CD4-positive, alpha-beta T cell (primary cell): ENCODE measurements at regions of chr2 and their contacts with region 1.

Region 1: DNA sequence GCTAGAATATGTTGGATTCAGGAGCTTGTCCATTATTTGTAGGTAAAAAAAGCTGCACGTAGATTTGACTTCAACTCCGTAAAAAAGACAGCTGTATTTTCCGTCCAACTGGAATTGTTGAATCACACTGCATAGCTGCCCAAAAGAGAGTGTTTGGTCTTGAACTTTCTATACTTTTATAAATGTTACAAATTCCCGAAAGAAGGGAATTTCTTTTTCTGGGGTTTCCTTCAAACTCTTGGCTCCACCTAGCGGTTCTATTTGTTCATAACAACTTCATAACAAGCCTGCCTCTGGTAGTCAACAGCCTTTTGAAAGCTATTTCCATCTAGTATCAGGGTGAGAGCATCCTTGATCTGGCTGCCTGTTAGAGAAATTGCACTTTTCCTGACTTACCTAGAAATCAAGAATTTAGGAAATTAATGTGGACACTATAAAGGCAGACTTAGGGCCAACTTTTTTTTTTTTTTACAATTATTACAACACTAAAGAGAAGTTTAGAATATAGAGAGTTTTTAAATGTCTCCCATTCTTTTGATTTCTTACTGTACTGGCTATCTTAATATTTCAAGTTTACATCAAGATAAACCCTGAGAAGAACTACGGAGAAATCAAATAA is 48.1 kb downstream of the TMEM185B start:
- DNase-seq: peak in 4 of 14 experiments; percentile 26 to 79 (median 74)
- ATAC-seq: no peak
- H3K4me3 ChIP-seq: no peak overlapping the region
- H3K4me3 Mint-ChIP-seq: peak overlapping the region; percentile 50
- H3K27ac ChIP-seq: no peak overlapping the region
- H3K27ac Mint-ChIP-seq: peak overlapping the region; percentile 95
- H3K4me1 ChIP-seq: peaks cover 34% of the 10 kb centered on the region
- H3K4me1 Mint-ChIP-seq: peaks cover 52% of the 10 kb centered on the region
- H3K27me3 ChIP-seq: no peaks in the 10 kb centered on the region
- H3K27me3 Mint-ChIP-seq: no peaks in the 10 kb centered on the region
- CTCF ChIP-seq: peak; percentile 88

Region 2: GRCh38 chr2:119641562-119642258 is 533.4 kb before region 1 on chr2:
- CTCF ChIA-PET with region 1: no interaction called
- POLR2A ChIA-PET with region 1: interaction called, 5 read pairs
- intact Hi-C with region 1: loop called (anchors 1 to 2 kb)
- DNase-seq: peak; percentile 46 to 84 (median 64)
- ATAC-seq: peak; percentile 94
- H3K4me3 ChIP-seq: no peak overlapping the region
- H3K4me3 Mint-ChIP-seq: no peak overlapping the region
- H3K27ac ChIP-seq: no peak overlapping the region
- H3K27ac Mint-ChIP-seq: no peak overlapping the region
- H3K4me1 ChIP-seq: peaks cover 4% of the 10 kb centered on the region
- H3K4me1 Mint-ChIP-seq: peaks cover 5% of the 10 kb centered on the region
- H3K27me3 ChIP-seq: no peaks in the 10 kb centered on the region
- H3K27me3 Mint-ChIP-seq: peaks cover 5% of the 10 kb centered on the region
- CTCF ChIP-seq: peak; percentile 96

Region 3: DNA sequence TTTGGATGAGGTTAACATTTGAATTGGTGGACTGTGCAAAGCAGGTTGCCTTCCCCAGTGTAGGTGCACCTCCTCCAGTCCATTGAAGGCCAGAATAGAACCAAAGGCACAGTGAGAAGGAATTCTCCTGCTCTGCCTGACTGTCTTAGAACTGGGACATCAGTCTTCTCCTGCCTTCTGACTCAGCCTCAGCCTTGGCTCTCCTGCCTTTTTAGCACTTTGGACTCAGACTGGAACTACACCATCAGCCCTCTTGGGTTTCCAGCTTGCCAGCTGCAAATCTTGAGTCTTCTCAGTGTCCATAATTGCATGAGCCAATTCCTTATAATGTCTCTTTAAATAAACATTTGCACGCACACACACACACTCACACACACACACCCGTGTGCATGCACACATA is 504.1 kb before region 1 on chr2:
- CTCF ChIA-PET with region 1: no interaction called
- POLR2A ChIA-PET with region 1: no interaction called
- intact Hi-C with region 1: no loop called
- DNase-seq: no peak
- ATAC-seq: no peak
- H3K4me3 ChIP-seq: no peak overlapping the region
- H3K4me3 Mint-ChIP-seq: no peak overlapping the region
- H3K27ac ChIP-seq: no peak overlapping the region
- H3K27ac Mint-ChIP-seq: no peak overlapping the region
- H3K4me1 ChIP-seq: no peaks in the 10 kb centered on the region
- H3K4me1 Mint-ChIP-seq: peaks cover 6% of the 10 kb centered on the region
- H3K27me3 ChIP-seq: no peaks in the 10 kb centered on the region
- H3K27me3 Mint-ChIP-seq: no peaks in the 10 kb centered on the region
- CTCF ChIP-seq: no peak

Region 4: DNA sequence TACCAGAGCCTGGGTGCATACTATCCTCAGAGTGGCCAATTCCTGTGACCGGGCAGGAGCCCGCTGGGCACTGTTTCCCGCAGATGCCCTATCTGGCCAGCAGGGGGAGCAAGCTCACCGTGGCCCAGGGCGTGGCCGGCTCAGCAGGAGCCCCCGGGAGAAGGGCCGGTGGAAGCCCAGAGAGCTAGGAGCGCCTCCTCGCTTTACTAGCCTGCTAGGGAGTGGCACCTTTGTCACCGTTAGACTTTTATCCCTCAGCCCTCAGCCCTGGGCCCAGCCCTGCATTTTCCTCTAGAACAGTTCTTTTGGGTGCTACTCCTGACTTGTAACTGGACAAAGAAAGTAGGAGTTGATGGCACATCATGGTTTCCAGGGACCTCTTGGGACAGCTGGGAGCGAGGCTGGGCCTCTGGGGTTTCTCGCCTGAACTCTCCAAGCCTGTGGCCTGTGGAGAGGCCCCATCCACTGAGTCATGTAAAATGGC is 472.1 kb before region 1 on chr2:
- CTCF ChIA-PET with region 1: interaction called, 4 read pairs
- POLR2A ChIA-PET with region 1: interaction called, 3 read pairs
- intact Hi-C with region 1: loop called (anchors 1 to 5 kb)
- DNase-seq: peak; percentile 28 to 82 (median 54)
- ATAC-seq: peak; percentile 71
- H3K4me3 ChIP-seq: no peak overlapping the region
- H3K4me3 Mint-ChIP-seq: no peak overlapping the region
- H3K27ac ChIP-seq: no peak overlapping the region
- H3K27ac Mint-ChIP-seq: no peak overlapping the region
- H3K4me1 ChIP-seq: peaks cover 26% of the 10 kb centered on the region
- H3K4me1 Mint-ChIP-seq: peaks cover 6% of the 10 kb centered on the region
- H3K27me3 ChIP-seq: no peaks in the 10 kb centered on the region
- H3K27me3 Mint-ChIP-seq: no peaks in the 10 kb centered on the region
- CTCF ChIP-seq: peak; percentile 98

Region 5: GRCh38 chr2:119826370-119826961 is 348.6 kb before region 1 on chr2:
- CTCF ChIA-PET with region 1: no interaction called
- POLR2A ChIA-PET with region 1: interaction called, 3 read pairs
- intact Hi-C with region 1: loop called in 1 of 2 experiments (anchors 10 kb)
- DNase-seq: peak in 13 of 14 experiments; percentile 10 to 71 (median 33)
- ATAC-seq: peak; percentile 82
- H3K4me3 ChIP-seq: no peak overlapping the region
- H3K4me3 Mint-ChIP-seq: no peak overlapping the region
- H3K27ac ChIP-seq: no peak overlapping the region
- H3K27ac Mint-ChIP-seq: no peak overlapping the region
- H3K4me1 ChIP-seq: no peaks in the 10 kb centered on the region
- H3K4me1 Mint-ChIP-seq: peaks cover 65% of the 10 kb centered on the region
- H3K27me3 ChIP-seq: no peaks in the 10 kb centered on the region
- H3K27me3 Mint-ChIP-seq: no peaks in the 10 kb centered on the region
- CTCF ChIP-seq: peak; percentile 74

Region 6: DNA sequence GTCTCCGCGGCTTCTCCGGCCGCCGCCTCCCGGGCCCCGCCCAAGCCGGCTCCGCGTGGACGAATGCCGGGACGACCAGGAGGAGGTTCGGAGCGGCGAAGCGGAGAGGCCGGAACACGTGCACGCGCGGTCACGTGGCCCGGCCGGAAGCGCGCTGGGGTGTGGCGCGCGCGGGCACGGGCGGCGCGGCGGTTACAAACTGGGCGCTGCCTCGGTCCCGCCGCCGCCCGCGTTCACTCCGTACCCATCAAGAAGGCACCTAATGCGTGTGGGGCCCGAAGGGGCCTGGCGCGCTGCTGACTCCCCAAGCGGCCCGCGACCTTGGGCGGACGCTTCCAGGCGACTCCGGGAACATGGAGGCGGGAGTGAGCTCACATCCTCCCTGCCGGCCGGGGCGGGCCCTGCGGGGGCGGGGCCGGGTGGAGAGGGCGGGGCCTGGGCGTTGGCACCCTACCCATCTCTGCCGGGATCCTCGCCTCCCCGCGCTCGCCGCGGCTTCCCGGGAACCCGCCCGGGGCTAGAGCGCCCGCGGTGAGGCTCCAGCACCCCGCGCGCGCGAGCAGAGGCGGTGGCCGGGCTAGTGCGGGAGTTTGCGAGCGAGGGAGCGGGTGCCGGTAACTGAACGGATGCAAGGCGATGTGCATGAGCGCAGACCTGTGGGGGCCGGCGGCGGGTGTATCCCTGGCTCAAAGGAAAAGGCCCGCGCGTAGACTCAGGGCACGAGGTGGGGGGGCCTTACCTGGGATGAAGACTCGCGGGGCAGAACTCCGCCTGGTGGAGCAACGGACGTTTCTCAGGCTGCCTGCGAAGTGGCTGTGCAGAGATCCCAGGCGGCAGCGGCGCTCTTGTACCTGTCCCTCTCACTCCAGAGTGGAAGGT is 48.2 kb after region 1 on chr2 and contains the start of gene TMEM185B:
- CTCF ChIA-PET with region 1: interaction called, 3 read pairs
- POLR2A ChIA-PET with region 1: interaction called, 19 read pairs
- intact Hi-C with region 1: loop called in 1 of 2 experiments (anchors 2 kb)
- DNase-seq: peak; percentile 80 to 95 (median 88)
- ATAC-seq: peak; percentile 95
- H3K4me3 ChIP-seq: peak within 1 kb of the TSS; percentile 72
- H3K4me3 Mint-ChIP-seq: peak within 1 kb of the TSS; percentile 87
- H3K27ac ChIP-seq: peak within 1 kb of the TSS; percentile 80 to 85
- H3K27ac Mint-ChIP-seq: peak within 1 kb of the TSS; percentile 87
- H3K4me1 ChIP-seq: peaks cover 37% of the 10 kb centered on the region
- H3K4me1 Mint-ChIP-seq: peaks cover 55% of the 10 kb centered on the region
- H3K27me3 ChIP-seq: no peaks in the 10 kb centered on the region
- H3K27me3 Mint-ChIP-seq: no peaks in the 10 kb centered on the region
- CTCF ChIP-seq: no peak
- total RNA-seq, gene TMEM185B: 17.7 to 19.0 TPM

Region 7: GRCh38 chr2:120312861-120313694 is 138.0 kb after region 1 on chr2:
- CTCF ChIA-PET with region 1: interaction called, 5 read pairs
- POLR2A ChIA-PET with region 1: interaction called, 11 read pairs
- intact Hi-C with region 1: no loop called
- DNase-seq: peak; percentile 60 to 84 (median 68)
- ATAC-seq: peak; percentile 78
- H3K4me3 ChIP-seq: peak overlapping the region; percentile 52
- H3K4me3 Mint-ChIP-seq: peak overlapping the region; percentile 74
- H3K27ac ChIP-seq: no peak overlapping the region
- H3K27ac Mint-ChIP-seq: peak overlapping the region; percentile 66
- H3K4me1 ChIP-seq: peaks cover 26% of the 10 kb centered on the region
- H3K4me1 Mint-ChIP-seq: peaks cover 29% of the 10 kb centered on the region
- H3K27me3 ChIP-seq: no peaks in the 10 kb centered on the region
- H3K27me3 Mint-ChIP-seq: no peaks in the 10 kb centered on the region
- CTCF ChIP-seq: peak; percentile 90